ENCODE measurements at regions of chr3 and their contacts with region 1.

Region 1: GRCh38 chr3:183385698-183386613 is 42.5 kb downstream of the MCF2L2 start:
- DNase-seq: peak; percentile 77
- ATAC-seq: peak; percentile 76
- H3K4me3 Mint-ChIP-seq: no peak overlapping the region
- H3K27ac Mint-ChIP-seq: peak overlapping the region; percentile 39
- H3K4me1 Mint-ChIP-seq: peaks cover 11% of the 10 kb centered on the region
- H3K27me3 Mint-ChIP-seq: no peaks in the 10 kb centered on the region
- CTCF ChIP-seq: peak; percentile 72

Region 2: GRCh38 chr3:183178629-183179549 is 207.1 kb before region 1 on chr3:
- CTCF ChIA-PET with region 1: interaction called, 277 read pairs
- POLR2A ChIA-PET with region 1: interaction called, 5 read pairs
- intact Hi-C with region 1: loop called (anchors 1 kb)
- DNase-seq: peak; percentile 79
- ATAC-seq: peak; percentile 84
- H3K4me3 Mint-ChIP-seq: peak overlapping the region; percentile 73
- H3K27ac Mint-ChIP-seq: no peak overlapping the region
- H3K4me1 Mint-ChIP-seq: peaks cover 11% of the 10 kb centered on the region
- H3K27me3 Mint-ChIP-seq: peaks cover 24% of the 10 kb centered on the region
- CTCF ChIP-seq: peak; percentile 29

Region 3: GRCh38 chr3:183233966-183234365 is 152.0 kb before region 1 on chr3:
- CTCF ChIA-PET with region 1: no interaction called
- POLR2A ChIA-PET with region 1: no interaction called
- intact Hi-C with region 1: no loop called
- DNase-seq: no peak
- ATAC-seq: peak; percentile 39
- H3K4me3 Mint-ChIP-seq: no peak overlapping the region
- H3K27ac Mint-ChIP-seq: no peak overlapping the region
- H3K4me1 Mint-ChIP-seq: peaks cover 5% of the 10 kb centered on the region
- H3K27me3 Mint-ChIP-seq: no peaks in the 10 kb centered on the region
- CTCF ChIP-seq: no peak

Region 4: GRCh38 chr3:183252973-183253901 is 132.7 kb before region 1 on chr3 and contains the start of gene B3GNT5:
- CTCF ChIA-PET with region 1: interaction called, 27 read pairs
- POLR2A ChIA-PET with region 1: no interaction called
- intact Hi-C with region 1: no loop called
- DNase-seq: peak; percentile 66
- ATAC-seq: peak; percentile 46
- H3K4me3 Mint-ChIP-seq: peak within 1 kb of the TSS; percentile 81
- H3K27ac Mint-ChIP-seq: peak within 1 kb of the TSS; percentile 78
- H3K4me1 Mint-ChIP-seq: peaks cover 24% of the 10 kb centered on the region
- H3K27me3 Mint-ChIP-seq: peaks cover 4% of the 10 kb centered on the region
- CTCF ChIP-seq: no peak
- total RNA-seq, gene B3GNT5: 25.8 to 26.1 TPM

Region 5: GRCh38 chr3:183265834-183266417 is 120.0 kb before region 1 on chr3:
- CTCF ChIA-PET with region 1: interaction called, 21 read pairs
- POLR2A ChIA-PET with region 1: no interaction called
- intact Hi-C with region 1: no loop called
- DNase-seq: peak; percentile 80
- ATAC-seq: peak; percentile 93
- H3K4me3 Mint-ChIP-seq: no peak overlapping the region
- H3K27ac Mint-ChIP-seq: no peak overlapping the region
- H3K4me1 Mint-ChIP-seq: peaks cover 28% of the 10 kb centered on the region
- H3K27me3 Mint-ChIP-seq: no peaks in the 10 kb centered on the region
- CTCF ChIP-seq: no peak

Region 6: DNA sequence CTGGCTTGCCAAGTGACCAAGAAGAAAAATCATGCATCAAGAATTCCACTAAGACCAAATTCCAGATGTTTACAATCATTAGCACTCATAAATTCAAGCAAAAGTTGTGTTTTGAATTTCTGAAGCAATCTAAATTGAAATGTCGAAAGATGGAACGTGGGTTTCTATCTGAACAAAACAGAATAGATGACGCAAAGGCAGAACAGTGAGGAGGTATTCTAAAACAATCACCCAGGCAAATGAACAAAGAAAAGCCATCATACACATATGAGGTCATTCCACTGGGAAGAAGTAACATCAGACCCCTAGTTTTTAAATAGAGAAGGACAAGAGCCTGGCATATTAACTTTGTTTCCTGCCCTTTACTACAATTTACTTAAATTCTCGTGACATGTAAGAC is 15.6 kb before region 1 on chr3:
- CTCF ChIA-PET with region 1: interaction called, 23 read pairs
- POLR2A ChIA-PET with region 1: no interaction called
- intact Hi-C with region 1: no loop called
- DNase-seq: no peak
- ATAC-seq: no peak
- H3K4me3 Mint-ChIP-seq: no peak overlapping the region
- H3K27ac Mint-ChIP-seq: no peak overlapping the region
- H3K4me1 Mint-ChIP-seq: peaks cover 28% of the 10 kb centered on the region
- H3K27me3 Mint-ChIP-seq: no peaks in the 10 kb centered on the region
- CTCF ChIP-seq: no peak

Region 7: GRCh38 chr3:183400352-183400751 is 14.4 kb after region 1 on chr3:
- CTCF ChIA-PET with region 1: interaction called, 19 read pairs
- POLR2A ChIA-PET with region 1: no interaction called
- intact Hi-C with region 1: no loop called
- DNase-seq: no peak
- ATAC-seq: no peak
- H3K4me3 Mint-ChIP-seq: no peak overlapping the region
- H3K27ac Mint-ChIP-seq: no peak overlapping the region
- H3K4me1 Mint-ChIP-seq: peaks cover 5% of the 10 kb centered on the region
- H3K27me3 Mint-ChIP-seq: no peaks in the 10 kb centered on the region
- CTCF ChIP-seq: no peak